Calu3 (cell line): ENCODE measurements at regions of chr3 and their contacts with region 1.

Region 1: GRCh38 chr3:79361748-79362378 is 405.9 kb downstream of the ROBO1 start:
- DNase-seq: no peak
- H3K4me3 Mint-ChIP-seq: no peak overlapping the region
- H3K27ac Mint-ChIP-seq: no peak overlapping the region
- H3K4me1 Mint-ChIP-seq: peaks cover 9% of the 10 kb centered on the region
- H3K27me3 Mint-ChIP-seq: no peaks in the 10 kb centered on the region
- CTCF ChIP-seq: peak; percentile 38

Region 2: GRCh38 chr3:79039192-79039591 is 322.7 kb before region 1 on chr3:
- CTCF ChIA-PET with region 1: no interaction called
- intact Hi-C with region 1: loop called (anchors 5 kb)
- DNase-seq: no peak
- H3K4me3 Mint-ChIP-seq: no peak overlapping the region
- H3K27ac Mint-ChIP-seq: no peak overlapping the region
- H3K4me1 Mint-ChIP-seq: no peaks in the 10 kb centered on the region
- H3K27me3 Mint-ChIP-seq: no peaks in the 10 kb centered on the region
- CTCF ChIP-seq: no peak

Region 3: DNA sequence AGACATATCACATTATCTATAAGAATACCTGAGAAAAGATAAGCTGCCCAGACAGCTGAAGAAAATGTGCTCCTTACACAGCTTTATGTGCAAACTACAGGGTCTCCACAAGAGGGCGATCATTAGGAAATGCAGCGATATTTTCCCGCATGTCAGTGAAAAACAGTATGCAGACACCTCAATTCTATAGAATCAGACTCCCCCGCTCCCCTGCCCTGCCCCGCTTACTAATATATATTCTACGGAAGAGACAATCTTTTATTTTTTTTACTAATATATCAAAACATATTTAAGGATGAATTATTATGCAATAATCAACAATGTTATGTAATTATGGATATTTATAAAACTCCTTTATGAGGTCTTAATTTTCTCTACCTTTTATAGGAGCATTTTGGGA is 275.3 kb before region 1 on chr3:
- CTCF ChIA-PET with region 1: interaction called, 60 read pairs
- intact Hi-C with region 1: loop called (anchors 1 kb)
- DNase-seq: peak; percentile 60
- H3K4me3 Mint-ChIP-seq: no peak overlapping the region
- H3K27ac Mint-ChIP-seq: no peak overlapping the region
- H3K4me1 Mint-ChIP-seq: no peaks in the 10 kb centered on the region
- H3K27me3 Mint-ChIP-seq: no peaks in the 10 kb centered on the region
- CTCF ChIP-seq: peak; percentile 58

Region 4: DNA sequence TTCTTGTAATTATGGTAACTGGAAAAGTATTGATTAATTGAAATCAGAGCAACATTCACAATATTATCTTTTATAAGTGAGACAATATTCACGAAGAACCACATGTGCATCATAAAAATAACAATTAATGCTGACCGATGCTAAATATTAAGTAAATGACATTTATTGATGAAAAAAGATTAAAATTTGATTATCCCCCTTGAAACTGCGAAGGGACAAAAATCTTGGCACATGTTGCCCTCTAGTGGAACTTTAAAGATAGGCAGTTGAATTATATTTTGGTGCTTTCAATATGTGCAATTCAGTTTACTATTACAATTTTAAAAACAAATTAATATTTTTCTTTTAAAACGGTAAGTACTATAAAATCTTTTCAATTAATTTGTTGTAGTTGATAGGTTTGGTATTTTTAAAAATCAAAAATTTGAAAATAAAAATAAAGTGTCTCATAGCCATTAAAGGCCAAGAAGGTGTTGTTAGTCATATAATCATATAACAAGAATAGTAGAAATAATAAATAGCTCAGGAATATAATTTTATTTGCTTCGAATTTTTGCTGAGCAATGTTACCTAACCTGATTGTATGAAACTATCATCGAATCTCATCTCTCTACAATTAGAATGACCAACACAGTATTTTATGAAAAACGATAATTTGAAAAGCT is 135.7 kb after region 1 on chr3:
- CTCF ChIA-PET with region 1: no interaction called
- intact Hi-C with region 1: loop called (anchors 5 kb)
- DNase-seq: no peak
- H3K4me3 Mint-ChIP-seq: no peak overlapping the region
- H3K27ac Mint-ChIP-seq: no peak overlapping the region
- H3K4me1 Mint-ChIP-seq: no peaks in the 10 kb centered on the region
- H3K27me3 Mint-ChIP-seq: no peaks in the 10 kb centered on the region
- CTCF ChIP-seq: peak; percentile 23